ENCODE measurements at regions of chr19 and their contacts with region 1.

Region 1: GRCh38 chr19:44954824-44955586 is at the start of gene CLPTM1:
- DNase-seq: peak; percentile 93 to 98 (median 96)
- ATAC-seq: peak; percentile 91
- H3K4me3 ChIP-seq: peak within 1 kb of the TSS; percentile 72 to 88
- H3K4me3 Mint-ChIP-seq: peak within 1 kb of the TSS; percentile 97
- H3K27ac ChIP-seq: peak within 1 kb of the TSS; percentile 76 to 92
- H3K27ac Mint-ChIP-seq: peak within 1 kb of the TSS; percentile 97
- H3K4me1 ChIP-seq: peaks cover 31% of the 10 kb centered on the region
- H3K4me1 Mint-ChIP-seq: peaks cover 56% of the 10 kb centered on the region
- H3K27me3 ChIP-seq: no peaks in the 10 kb centered on the region
- H3K27me3 Mint-ChIP-seq: no peaks in the 10 kb centered on the region
- CTCF ChIP-seq: no peak
- total RNA-seq, gene CLPTM1: 108 to 113 TPM

Region 2: DNA sequence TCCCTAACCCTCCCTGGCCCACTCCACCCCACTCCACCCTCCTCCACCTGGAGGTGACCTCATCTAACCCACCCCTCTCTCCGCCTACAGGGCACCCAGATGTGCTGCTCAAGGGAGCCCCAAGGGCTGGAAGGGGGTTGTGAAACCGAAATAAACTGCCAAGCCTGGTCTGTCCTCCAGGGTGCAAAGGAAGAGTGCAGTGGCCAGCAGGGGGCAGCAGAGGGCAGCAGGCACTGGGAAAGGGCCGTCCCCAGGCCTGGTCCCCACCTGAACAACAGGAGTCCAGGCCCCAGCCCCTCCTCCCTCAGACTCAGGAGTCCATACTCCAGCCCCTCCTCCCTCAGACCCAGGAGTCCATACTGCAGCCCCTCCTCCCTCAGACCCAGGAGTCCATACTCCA is 154.5 kb before region 1 on chr19:
- CTCF ChIA-PET with region 1: no interaction called
- POLR2A ChIA-PET with region 1: no interaction called
- intact Hi-C with region 1: loop called in 1 of 2 experiments (anchors 2 kb)
- DNase-seq: peak; percentile 71 to 88 (median 79)
- ATAC-seq: peak; percentile 92
- H3K4me3 ChIP-seq: no peak overlapping the region
- H3K4me3 Mint-ChIP-seq: no peak overlapping the region
- H3K27ac ChIP-seq: no peak overlapping the region
- H3K27ac Mint-ChIP-seq: no peak overlapping the region
- H3K4me1 ChIP-seq: peaks cover 21% of the 10 kb centered on the region
- H3K4me1 Mint-ChIP-seq: peaks cover 12% of the 10 kb centered on the region
- H3K27me3 ChIP-seq: no peaks in the 10 kb centered on the region
- H3K27me3 Mint-ChIP-seq: peaks cover 3% of the 10 kb centered on the region
- CTCF ChIP-seq: peak; percentile 70

Region 3: DNA sequence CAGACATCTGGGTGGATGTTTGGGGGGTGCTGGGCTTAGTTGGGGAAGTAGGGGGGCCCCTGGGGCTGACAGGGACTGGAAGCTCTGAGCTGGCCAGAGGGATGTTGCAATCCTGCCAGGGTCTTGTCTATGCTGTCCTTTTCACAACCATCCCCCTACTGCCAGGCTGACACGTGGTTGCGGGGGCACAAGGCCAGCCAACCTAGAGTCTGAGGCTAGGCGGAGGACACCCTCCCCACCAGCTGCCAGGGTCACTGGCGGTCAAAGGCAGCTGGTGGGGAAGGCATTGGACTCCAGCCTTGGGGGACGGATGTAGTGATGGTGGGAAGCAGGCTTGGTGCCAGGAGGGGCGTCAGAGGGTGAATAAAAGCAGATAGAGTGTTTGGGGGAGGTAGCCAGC is 42.2 kb before region 1 on chr19:
- CTCF ChIA-PET with region 1: interaction called, 4 read pairs
- POLR2A ChIA-PET with region 1: no interaction called
- intact Hi-C with region 1: loop called in 1 of 2 experiments (anchors 1 kb)
- DNase-seq: no peak
- ATAC-seq: no peak
- H3K4me3 ChIP-seq: no peak overlapping the region
- H3K4me3 Mint-ChIP-seq: no peak overlapping the region
- H3K27ac ChIP-seq: no peak overlapping the region
- H3K27ac Mint-ChIP-seq: no peak overlapping the region
- H3K4me1 ChIP-seq: peaks cover 7% of the 10 kb centered on the region
- H3K4me1 Mint-ChIP-seq: peaks cover 6% of the 10 kb centered on the region
- H3K27me3 ChIP-seq: peaks cover 2 to 5% of the 10 kb centered on the region in 2 experiments
- H3K27me3 Mint-ChIP-seq: peaks cover 35% of the 10 kb centered on the region
- CTCF ChIP-seq: no peak

Region 4: DNA sequence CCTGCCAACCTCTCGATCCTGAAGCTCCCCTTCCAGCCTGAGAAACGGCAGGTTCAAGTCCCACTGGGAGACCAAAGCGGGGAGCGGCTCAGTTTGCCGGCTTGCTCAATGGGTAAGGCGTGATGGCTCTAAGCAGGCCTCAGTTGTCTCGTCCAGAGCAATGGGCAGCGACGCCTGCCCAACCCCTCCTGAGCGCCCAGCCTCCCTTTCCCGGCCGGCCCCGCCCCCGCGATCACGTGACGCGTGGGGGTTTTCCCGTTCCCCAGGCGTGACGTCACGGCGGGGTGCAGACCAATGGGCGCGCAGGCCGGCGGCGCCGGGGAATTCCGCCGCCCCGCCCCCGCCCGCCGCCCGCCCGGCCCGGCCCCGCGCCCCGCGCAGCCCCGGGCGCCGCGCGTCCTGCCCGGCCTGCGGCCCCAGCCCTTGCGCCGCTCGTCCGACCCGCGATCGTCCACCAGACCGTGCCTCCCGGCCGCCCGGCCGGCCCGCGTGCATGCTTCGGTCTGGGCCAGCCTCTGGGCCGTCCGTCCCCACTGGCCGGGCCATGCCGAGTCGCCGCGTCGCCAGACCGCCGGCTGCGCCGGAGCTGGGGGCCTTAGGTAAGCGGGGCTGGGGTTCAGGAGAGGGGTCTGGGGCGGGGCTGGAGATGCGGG is 46.2 kb after region 1 on chr19 and contains the start of gene RELB:
- CTCF ChIA-PET with region 1: no interaction called
- POLR2A ChIA-PET with region 1: interaction called, 6 read pairs
- intact Hi-C with region 1: loop called (anchors 1 kb)
- DNase-seq: peak; percentile 92 to 98 (median 95)
- ATAC-seq: peak; percentile 49
- H3K4me3 ChIP-seq: peak within 1 kb of the TSS; percentile 58 to 98
- H3K4me3 Mint-ChIP-seq: peak within 1 kb of the TSS; percentile 96
- H3K27ac ChIP-seq: peak within 1 kb of the TSS; percentile 98 to 100
- H3K27ac Mint-ChIP-seq: peak within 1 kb of the TSS; percentile 100
- H3K4me1 ChIP-seq: peaks cover 10% of the 10 kb centered on the region
- H3K4me1 Mint-ChIP-seq: peaks cover 16% of the 10 kb centered on the region
- H3K27me3 ChIP-seq: no peaks in the 10 kb centered on the region
- H3K27me3 Mint-ChIP-seq: no peaks in the 10 kb centered on the region
- CTCF ChIP-seq: no peak
- total RNA-seq, gene RELB: 168 to 179 TPM

Region 5: GRCh38 chr19:45016388-45017319 is 61.6 kb after region 1 on chr19:
- CTCF ChIA-PET with region 1: no interaction called
- POLR2A ChIA-PET with region 1: no interaction called
- intact Hi-C with region 1: no loop called
- DNase-seq: peak; percentile 54 to 95 (median 73)
- ATAC-seq: peak; percentile 85
- H3K4me3 ChIP-seq: peak overlapping the region in 1 of 2 experiments; percentile 9
- H3K4me3 Mint-ChIP-seq: peak overlapping the region; percentile 42
- H3K27ac ChIP-seq: peak overlapping the region; percentile 44 to 82
- H3K27ac Mint-ChIP-seq: peak overlapping the region; percentile 87
- H3K4me1 ChIP-seq: peaks cover 3% of the 10 kb centered on the region
- H3K4me1 Mint-ChIP-seq: peaks cover 13% of the 10 kb centered on the region
- H3K27me3 ChIP-seq: no peaks in the 10 kb centered on the region
- H3K27me3 Mint-ChIP-seq: no peaks in the 10 kb centered on the region
- CTCF ChIP-seq: peak; percentile 68

Region 6: DNA sequence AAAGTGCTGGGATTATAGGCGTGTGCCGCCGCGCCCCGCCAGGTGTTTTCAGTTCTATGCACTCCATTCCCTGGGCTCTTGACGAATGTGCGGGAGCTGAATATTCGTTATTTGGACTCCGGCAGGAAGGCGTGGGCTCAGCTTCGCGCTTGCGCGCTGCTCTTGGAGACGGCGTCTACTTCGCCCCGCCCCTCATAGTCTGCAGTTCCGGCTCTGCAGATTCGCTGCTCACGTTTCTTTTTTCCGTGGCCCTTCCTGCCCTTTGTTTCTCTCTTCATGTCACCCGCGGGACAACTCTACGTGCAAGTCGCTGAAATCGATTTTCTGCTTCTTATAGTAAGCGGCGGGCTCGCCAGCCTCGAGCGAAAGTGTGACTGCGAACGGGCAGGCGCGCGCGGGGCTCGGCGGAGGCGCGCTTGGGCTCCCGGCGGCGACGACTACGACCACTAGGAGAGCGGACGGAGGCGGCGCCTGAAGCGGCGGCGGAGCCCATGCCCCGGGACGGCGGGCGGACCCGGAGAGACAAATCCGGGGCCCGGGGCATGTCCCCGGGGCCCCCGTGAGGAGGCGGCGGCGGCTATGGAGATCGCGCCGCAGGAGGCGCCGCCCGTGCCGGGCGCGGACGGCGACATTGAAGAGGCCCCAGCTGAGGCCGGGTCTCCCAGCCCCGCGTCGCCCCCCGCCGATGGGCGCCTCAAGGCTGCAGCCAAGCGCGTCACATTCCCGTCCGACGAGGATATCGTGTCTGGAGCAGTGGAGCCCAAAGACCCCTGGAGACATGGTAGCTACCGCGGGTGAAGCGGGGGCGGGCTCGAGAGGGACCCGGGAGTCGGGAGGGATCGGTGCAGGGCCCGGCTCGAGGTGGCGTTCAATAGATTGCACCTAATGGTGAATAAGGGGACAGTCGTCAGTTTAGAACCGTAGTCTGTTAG is 138.0 kb after region 1 on chr19 and contains the start of gene PPP1R37:
- CTCF ChIA-PET with region 1: no interaction called
- POLR2A ChIA-PET with region 1: no interaction called
- intact Hi-C with region 1: loop called in 1 of 2 experiments (anchors 1 kb)
- DNase-seq: peak; percentile 76 to 97 (median 92)
- ATAC-seq: peak; percentile 76
- H3K4me3 ChIP-seq: peak within 1 kb of the TSS; percentile 64 to 88
- H3K4me3 Mint-ChIP-seq: peak within 1 kb of the TSS; percentile 93
- H3K27ac ChIP-seq: peak within 1 kb of the TSS; percentile 84 to 96
- H3K27ac Mint-ChIP-seq: peak within 1 kb of the TSS; percentile 97
- H3K4me1 ChIP-seq: peaks cover 51% of the 10 kb centered on the region
- H3K4me1 Mint-ChIP-seq: peaks cover 67% of the 10 kb centered on the region
- H3K27me3 ChIP-seq: no peaks in the 10 kb centered on the region
- H3K27me3 Mint-ChIP-seq: no peaks in the 10 kb centered on the region
- CTCF ChIP-seq: peak; percentile 43
- total RNA-seq, gene PPP1R37: 19.3 to 19.9 TPM